ENCODE measurements at regions of chr17 and their contacts with region 1.

Region 1: DNA sequence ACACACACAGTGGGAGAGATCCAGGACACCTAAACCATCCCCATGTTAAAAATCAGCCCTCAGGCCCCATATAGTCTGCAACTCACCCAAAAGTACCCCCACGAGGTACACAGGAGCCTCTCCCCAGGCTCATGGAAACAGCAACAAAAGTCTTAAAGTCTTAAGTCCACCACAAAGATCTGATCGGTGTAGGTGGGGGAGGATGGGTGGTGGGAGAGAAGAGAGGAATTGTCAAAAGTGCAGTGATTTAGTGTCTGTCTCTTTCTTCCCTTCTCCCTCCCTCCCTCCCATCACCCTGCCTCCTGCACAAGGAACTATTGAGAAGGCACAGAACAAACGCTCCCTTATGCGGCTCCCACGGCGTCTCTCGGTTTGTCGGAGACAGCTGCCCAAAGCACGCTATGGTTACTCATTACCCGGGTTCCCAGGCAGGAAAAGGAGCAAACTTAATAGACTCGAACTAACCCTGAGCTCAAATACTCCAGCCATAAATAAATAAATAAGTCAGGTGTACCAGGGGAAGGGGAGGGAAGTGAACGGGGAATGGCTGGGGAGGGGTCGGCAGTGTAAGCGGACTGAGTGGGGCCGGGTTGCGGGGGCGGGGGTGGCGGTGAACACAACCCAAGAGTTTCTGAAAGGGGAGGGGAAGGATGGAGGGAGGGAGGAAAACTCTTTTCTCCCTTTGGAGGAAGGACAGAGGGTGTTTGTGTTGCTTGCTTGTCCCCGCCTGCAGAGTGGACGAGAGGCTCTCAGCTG is 477.4 kb downstream of the SLC39A11 start:
- DNase-seq: peak; percentile 84
- ATAC-seq: peak; percentile 94

Region 2: DNA sequence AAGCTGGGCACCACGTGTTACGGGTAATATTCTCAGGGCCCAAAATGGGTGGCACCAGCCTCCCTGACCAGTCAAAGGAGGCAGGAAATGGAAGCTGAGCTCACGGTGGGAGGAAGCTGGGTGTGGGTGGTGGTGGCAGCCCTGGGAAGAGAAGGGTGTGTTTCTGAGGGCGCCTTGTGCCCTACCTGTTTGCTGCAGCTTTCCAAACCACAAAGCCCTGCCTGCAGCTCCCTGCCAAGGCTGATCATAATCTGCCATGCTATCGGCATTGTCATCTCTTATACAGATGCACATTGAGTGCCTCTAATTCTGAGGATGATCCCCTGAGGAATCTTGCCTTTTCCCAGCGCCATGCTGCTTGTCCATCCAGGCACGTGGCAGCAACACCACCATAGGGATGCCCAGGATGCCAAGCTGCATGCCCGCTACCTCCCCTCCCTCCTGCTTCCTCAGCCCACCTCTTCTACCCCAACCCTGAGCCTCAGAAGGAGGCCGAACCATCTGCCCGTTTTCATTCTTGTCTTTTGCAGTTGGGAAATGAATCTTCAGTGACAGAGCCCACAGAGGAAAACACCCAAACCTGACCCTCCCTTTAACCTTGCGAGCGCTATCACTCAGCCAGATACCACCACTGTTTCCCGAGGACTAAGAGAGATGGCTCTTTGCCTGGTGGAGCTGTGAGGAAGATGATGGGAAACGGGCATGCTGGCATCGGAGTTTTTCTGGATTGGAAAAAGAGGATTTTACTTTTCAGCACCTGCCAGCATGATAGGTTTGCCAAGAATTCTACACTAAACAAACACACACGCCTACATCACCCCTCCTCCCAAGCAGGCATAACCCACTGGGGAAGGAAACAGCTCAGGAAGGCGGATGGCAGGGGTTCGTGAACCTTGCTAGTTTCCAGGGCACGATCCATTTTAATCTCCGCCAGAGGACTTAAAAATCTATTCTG is 19.9 kb after region 1 on chr17:
- intact Hi-C with region 1: no loop called
- DNase-seq: no peak
- ATAC-seq: no peak

Region 3: GRCh38 chr17:72665852-72666851 is 51.1 kb after region 1 on chr17:
- intact Hi-C with region 1: no loop called
- DNase-seq: no peak
- ATAC-seq: peak; percentile 91

Region 4: DNA sequence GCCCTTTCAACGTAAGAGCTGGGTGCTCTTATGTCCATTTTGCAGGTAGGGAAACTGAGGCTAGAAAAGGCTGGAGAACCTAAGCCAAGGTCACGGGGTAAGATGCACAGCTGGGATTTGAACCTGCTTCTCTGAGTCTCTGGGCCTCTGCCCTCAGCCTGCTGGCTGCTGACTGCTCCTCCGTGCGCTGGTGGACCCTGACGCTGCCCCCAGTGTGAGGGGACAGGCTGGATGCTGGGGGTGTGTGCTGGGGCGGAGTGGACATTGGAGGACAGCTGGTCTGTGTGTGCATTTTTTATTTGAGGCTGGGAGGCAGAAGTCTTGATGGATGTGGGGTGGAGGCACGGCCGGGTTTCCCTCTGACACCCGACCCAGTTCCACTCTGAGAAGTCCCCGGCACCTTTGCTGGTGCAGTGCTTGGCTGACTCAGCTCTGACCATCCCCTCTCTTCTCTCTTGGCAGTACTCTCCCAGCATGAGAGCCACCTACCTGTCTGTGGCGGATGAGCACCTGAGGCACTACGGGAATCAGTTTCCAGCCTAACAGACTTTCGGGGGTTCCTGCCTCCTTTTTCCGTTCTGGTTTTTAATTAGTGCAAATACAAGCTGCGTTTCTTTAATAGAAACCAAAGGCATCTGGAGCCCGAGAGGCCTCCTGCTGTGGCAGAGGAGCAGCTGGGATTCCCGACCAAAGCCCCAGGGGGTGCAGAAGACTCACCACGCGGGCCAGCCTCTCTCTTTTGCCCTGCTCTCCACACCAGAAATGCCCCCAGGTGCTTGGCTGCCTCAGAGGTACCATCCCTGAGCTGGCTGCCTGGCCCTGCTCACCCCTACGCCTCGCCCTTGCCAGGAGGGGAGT is 1644.8 kb after region 1 on chr17:
- intact Hi-C with region 1: loop called (anchors 5 kb)
- DNase-seq: no peak
- ATAC-seq: no peak